ENCODE measurements at regions of chr7 and their contacts with region 1.

Region 1: GRCh38 chr7:30412810-30413504 is 65.6 kb downstream of the NOD1 start:
- DNase-seq: peak in 4 of 14 experiments; percentile 31 to 64 (median 54)
- ATAC-seq: no peak
- H3K4me3 ChIP-seq: no peak overlapping the region
- H3K4me3 Mint-ChIP-seq: no peak overlapping the region
- H3K27ac ChIP-seq: no peak overlapping the region
- H3K27ac Mint-ChIP-seq: no peak overlapping the region
- H3K4me1 ChIP-seq: no peaks in the 10 kb centered on the region
- H3K4me1 Mint-ChIP-seq: no peaks in the 10 kb centered on the region
- H3K27me3 ChIP-seq: no peaks in the 10 kb centered on the region
- H3K27me3 Mint-ChIP-seq: no peaks in the 10 kb centered on the region
- CTCF ChIP-seq: peak; percentile 58

Region 2: DNA sequence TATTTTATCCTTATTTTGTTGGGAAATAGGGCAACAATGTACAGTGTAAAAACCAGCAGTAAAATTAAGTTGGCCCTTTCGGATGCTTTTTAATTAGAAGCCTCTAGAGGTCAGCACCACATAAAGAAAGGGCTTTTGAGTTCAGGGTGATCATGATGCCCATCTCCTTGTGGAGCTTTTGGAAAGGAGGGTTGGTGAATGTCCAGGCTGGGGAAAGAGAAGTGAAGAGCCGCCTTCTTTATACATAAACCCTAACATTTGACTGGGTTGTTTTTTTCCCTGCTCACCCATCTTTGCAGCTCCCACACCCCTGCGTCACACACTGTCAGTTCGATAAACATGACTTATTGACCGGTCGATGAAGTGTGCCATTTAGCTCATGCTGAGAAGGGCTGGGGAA is 248.4 kb before region 1 on chr7:
- CTCF ChIA-PET with region 1: no interaction called
- POLR2A ChIA-PET with region 1: no interaction called
- intact Hi-C with region 1: loop called in 1 of 2 experiments (anchors 5 kb)
- DNase-seq: peak in 3 of 14 experiments; percentile 43 to 51 (median 46)
- ATAC-seq: no peak
- H3K4me3 ChIP-seq: no peak overlapping the region
- H3K4me3 Mint-ChIP-seq: no peak overlapping the region
- H3K27ac ChIP-seq: no peak overlapping the region
- H3K27ac Mint-ChIP-seq: no peak overlapping the region
- H3K4me1 ChIP-seq: peaks cover 13% of the 10 kb centered on the region
- H3K4me1 Mint-ChIP-seq: peaks cover 36% of the 10 kb centered on the region
- H3K27me3 ChIP-seq: no peaks in the 10 kb centered on the region
- H3K27me3 Mint-ChIP-seq: no peaks in the 10 kb centered on the region
- CTCF ChIP-seq: peak; percentile 34

Region 3: GRCh38 chr7:30276203-30276900 is 136.6 kb before region 1 on chr7:
- CTCF ChIA-PET with region 1: no interaction called
- POLR2A ChIA-PET with region 1: no interaction called
- intact Hi-C with region 1: loop called in 1 of 2 experiments (anchors 2 kb)
- DNase-seq: peak; percentile 33 to 78 (median 40)
- ATAC-seq: peak; percentile 86
- H3K4me3 ChIP-seq: no peak overlapping the region
- H3K4me3 Mint-ChIP-seq: no peak overlapping the region
- H3K27ac ChIP-seq: no peak overlapping the region
- H3K27ac Mint-ChIP-seq: no peak overlapping the region
- H3K4me1 ChIP-seq: peaks cover 6% of the 10 kb centered on the region
- H3K4me1 Mint-ChIP-seq: no peaks in the 10 kb centered on the region
- H3K27me3 ChIP-seq: no peaks in the 10 kb centered on the region
- H3K27me3 Mint-ChIP-seq: no peaks in the 10 kb centered on the region
- CTCF ChIP-seq: peak; percentile 75

Measured in CD4-positive, alpha-beta T cell (primary cell).